Heart right ventricle (tissue), 16 donors: ENCODE measurements at regions of chr7 and their contacts with region 1.

Region 1: GRCh38 chr7:131107337-131108211 is 220.1 kb upstream of the MKLN1 start:
- DNase-seq: peak; percentile 60 to 79
- ATAC-seq: peak; percentile 41 to 58 (median 50)
- H3K4me3 ChIP-seq: peak overlapping the region; percentile 74 to 97 (median 88)
- H3K27ac ChIP-seq: peak overlapping the region; percentile 94 to 100 (median 99)
- H3K4me1 ChIP-seq: peaks cover 0 to 69% (median 55%) of the 10 kb centered on the region in 9 donors
- H3K27me3 ChIP-seq: no peaks in the 10 kb centered on the region
- CTCF ChIP-seq: peak in 1 of 9 donors; percentile 28

Region 2: GRCh38 chr7:131040467-131040932 is 67.1 kb before region 1 on chr7:
- intact Hi-C with region 1: no loop called
- DNase-seq: peak in 1 of 2 donors; percentile 71
- ATAC-seq: peak in 7 of 8 donors; percentile 60 to 83 (median 79)
- H3K4me3 ChIP-seq: no peak overlapping the region
- H3K27ac ChIP-seq: peak overlapping the region in 6 of 10 donors; percentile 30 to 79 (median 48)
- H3K4me1 ChIP-seq: peaks cover 0 to 64% (median 42%) of the 10 kb centered on the region in 9 donors
- H3K27me3 ChIP-seq: no peaks in the 10 kb centered on the region
- CTCF ChIP-seq: peak; percentile 76 to 97 (median 89)

Region 3: GRCh38 chr7:131071786-131072504 is 35.6 kb before region 1 on chr7:
- intact Hi-C with region 1: loop called in 4 of 10 experiments (anchors 2 to 5 kb)
- DNase-seq: peak in 1 of 2 donors; percentile 87
- ATAC-seq: peak; percentile 54 to 80 (median 74)
- H3K4me3 ChIP-seq: peak overlapping the region in 7 of 10 donors; percentile 1 to 36 (median 31)
- H3K27ac ChIP-seq: peak overlapping the region in 9 of 10 donors; percentile 59 to 84 (median 70)
- H3K4me1 ChIP-seq: peaks cover 6 to 98% (median 74%) of the 10 kb centered on the region in 9 donors
- H3K27me3 ChIP-seq: no peaks in the 10 kb centered on the region
- CTCF ChIP-seq: peak in 8 of 9 donors; percentile 34 to 70 (median 52)

Region 4: DNA sequence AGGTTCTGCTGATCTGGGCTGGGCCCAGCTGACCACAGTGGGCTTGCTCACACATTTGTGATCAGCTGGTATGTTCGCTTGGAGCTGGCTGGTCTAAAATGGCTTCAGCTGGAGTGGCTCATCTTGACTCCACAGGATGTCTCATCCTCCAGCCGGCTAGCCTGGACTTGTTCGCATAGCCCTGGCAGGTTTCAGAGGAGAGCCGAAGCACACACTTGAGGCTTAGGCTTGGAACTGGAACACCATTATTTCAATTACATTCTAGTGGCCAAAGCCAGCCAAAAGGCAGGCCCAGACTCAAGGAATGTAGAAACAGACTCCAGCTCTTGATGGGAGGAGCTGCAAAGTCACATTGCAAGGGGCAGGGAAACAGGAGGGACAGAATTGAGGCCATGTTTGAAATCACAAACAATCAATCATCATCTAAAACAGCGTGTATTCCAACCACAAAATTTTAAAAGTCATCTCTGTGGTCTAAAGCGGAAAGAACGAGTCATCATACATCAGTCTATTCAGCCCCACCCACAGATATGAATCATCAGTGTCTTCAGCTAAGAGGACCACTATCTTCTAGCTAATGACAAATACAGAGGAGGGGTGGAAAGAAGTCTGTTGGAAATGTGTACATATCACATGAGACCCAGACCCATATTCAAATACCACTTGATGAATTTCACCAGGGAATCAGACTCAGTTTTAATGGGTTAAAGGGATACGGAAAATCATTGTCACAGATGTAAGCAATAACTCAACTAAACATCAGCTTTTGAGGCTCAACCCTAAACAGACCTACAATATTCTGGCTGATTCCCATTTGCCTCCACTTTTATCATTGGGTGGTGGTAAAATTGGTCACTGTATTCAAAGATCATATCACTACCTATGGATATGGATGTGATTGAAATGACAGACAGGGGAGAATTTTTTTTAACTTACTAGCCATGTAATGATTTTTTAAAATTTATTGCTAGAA is 81.1 kb after region 1 on chr7:
- intact Hi-C with region 1: loop called in 3 of 10 experiments (anchors 5 to 10 kb)
- DNase-seq: no peak
- ATAC-seq: peak in 5 of 8 donors; percentile 17 to 54 (median 49)
- H3K4me3 ChIP-seq: no peak overlapping the region
- H3K27ac ChIP-seq: peak overlapping the region in 1 of 10 donors; percentile 78
- H3K4me1 ChIP-seq: peaks cover 0 to 38% (median 0%) of the 10 kb centered on the region in 9 donors
- H3K27me3 ChIP-seq: no peaks in the 10 kb centered on the region
- CTCF ChIP-seq: no peak

Region 5: DNA sequence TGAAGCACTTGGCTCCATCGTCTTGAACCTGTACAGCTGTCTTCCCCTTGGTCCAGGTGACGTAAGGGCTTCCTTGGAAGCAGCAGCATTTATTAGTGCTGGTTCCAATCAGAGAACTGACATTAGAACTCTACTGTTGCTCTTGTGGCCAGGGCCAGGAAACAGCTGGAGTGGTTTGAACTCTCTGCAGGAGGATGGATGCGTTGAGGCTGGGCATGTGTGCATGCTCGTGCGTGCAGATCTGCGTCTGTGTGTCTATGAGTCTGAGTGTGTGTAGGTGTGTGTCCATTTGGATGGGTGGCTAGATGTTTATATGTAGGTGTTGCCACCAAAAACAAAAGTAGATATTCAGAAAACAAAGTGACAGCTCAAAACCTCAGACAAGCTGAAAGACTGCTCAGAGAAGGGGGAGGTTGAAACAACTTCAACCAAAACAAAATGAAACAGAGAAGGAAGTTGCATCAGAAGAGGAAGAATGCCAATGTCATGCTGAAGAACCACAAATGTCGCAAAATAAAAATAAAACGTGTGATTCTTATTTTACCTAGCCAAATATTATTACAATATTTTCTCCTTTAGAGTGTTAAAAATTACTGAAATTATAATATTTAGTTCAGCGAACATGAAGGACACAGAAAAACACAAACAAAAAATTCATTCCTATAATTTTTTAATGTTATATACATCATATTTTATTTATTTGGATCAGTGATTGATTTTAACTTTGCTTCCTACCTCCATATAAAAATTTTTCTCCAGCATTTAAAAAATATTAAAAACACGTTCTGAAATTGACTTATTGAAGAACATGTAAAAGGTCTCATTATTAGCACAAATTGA is 124.0 kb after region 1 on chr7:
- intact Hi-C with region 1: loop called in 1 of 10 experiments (anchors 10 kb)
- DNase-seq: peak; percentile 23 to 58
- ATAC-seq: peak in 7 of 8 donors; percentile 68 to 83 (median 82)
- H3K4me3 ChIP-seq: peak overlapping the region in 3 of 10 donors; percentile 13 to 35 (median 21)
- H3K27ac ChIP-seq: peak overlapping the region in 9 of 10 donors; percentile 8 to 82 (median 48)
- H3K4me1 ChIP-seq: peaks cover 8 to 40% (median 20%) of the 10 kb centered on the region in 9 donors
- H3K27me3 ChIP-seq: no peaks in the 10 kb centered on the region
- CTCF ChIP-seq: no peak

Region 6: DNA sequence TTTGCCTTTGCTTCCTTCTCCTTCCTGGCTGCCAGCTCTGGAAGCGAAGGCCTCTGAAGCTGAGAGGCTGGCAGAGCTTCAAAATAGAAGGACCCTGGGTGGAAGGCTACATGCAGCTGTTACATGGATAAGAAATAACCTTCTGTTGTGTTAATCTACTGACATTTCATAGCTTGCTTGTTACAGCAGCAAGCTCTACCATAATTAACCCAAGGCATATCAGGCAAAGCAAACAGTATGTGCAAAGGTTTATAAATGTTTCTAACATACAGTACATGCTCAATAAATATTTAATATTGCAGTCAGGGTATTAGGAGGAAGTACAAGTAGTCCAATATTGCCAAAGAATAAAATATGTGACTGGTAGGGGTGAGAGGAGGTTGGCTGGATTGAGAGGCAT is 164.5 kb after region 1 on chr7:
- intact Hi-C with region 1: loop called in 1 of 10 experiments (anchors 5 kb)
- DNase-seq: no peak
- ATAC-seq: peak in 2 of 8 donors; percentile 12 to 28
- H3K4me3 ChIP-seq: no peak overlapping the region
- H3K27ac ChIP-seq: peak overlapping the region in 1 of 10 donors; percentile 75
- H3K4me1 ChIP-seq: peaks cover 0 to 20% (median 12%) of the 10 kb centered on the region in 9 donors
- H3K27me3 ChIP-seq: no peaks in the 10 kb centered on the region
- CTCF ChIP-seq: no peak

Region 7: DNA sequence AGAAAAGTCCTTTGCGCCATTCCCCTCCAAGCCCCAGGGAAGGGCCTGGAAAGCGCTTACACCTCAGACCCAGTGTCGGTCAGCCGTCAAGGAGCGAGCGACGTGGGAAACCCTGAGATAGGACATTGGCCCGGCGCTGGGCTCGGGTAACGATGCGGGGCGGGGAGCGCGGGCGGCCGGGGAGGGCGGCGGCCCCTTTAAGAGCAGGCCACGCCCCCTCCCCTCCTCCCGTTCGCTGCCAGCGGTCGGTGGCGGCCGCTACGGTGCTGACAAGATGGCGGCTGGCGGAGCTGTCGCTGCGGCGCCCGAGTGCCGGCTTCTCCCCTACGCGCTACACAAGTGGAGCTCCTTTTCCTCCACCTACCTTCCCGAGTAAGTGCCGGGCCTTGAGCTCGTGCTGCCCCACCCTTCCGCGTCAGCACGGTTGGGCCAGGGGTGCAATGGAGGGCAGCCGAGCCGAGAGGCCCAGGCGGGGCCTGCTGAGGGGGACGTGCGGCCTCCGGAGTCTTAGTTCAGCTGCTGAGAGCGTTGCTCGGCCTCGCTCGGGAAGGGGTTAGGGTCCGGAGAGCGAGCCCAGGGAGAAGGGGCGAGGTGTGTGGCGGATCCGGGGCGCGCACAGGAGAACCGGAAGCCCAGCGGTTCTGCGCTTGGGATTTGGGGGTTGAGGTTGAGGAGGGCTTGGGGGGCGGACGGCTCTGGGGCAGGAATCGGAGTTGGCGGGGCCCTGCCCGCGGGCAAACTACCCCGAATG is 220.2 kb after region 1 on chr7 and contains the start of gene MKLN1:
- intact Hi-C with region 1: loop called in 3 of 10 experiments (anchors 2 to 10 kb)
- DNase-seq: peak; percentile 93
- ATAC-seq: peak; percentile 99 to 100 (median 99)
- H3K4me3 ChIP-seq: peak within 1 kb of the TSS; percentile 67 to 94 (median 82)
- H3K27ac ChIP-seq: peak within 1 kb of the TSS; percentile 93 to 99 (median 97)
- H3K4me1 ChIP-seq: peaks cover 0 to 50% (median 41%) of the 10 kb centered on the region in 9 donors
- H3K27me3 ChIP-seq: no peaks in the 10 kb centered on the region
- CTCF ChIP-seq: no peak
- total RNA-seq, gene MKLN1: 34.3 to 48.2 (median 44.8) TPM

Region 8: DNA sequence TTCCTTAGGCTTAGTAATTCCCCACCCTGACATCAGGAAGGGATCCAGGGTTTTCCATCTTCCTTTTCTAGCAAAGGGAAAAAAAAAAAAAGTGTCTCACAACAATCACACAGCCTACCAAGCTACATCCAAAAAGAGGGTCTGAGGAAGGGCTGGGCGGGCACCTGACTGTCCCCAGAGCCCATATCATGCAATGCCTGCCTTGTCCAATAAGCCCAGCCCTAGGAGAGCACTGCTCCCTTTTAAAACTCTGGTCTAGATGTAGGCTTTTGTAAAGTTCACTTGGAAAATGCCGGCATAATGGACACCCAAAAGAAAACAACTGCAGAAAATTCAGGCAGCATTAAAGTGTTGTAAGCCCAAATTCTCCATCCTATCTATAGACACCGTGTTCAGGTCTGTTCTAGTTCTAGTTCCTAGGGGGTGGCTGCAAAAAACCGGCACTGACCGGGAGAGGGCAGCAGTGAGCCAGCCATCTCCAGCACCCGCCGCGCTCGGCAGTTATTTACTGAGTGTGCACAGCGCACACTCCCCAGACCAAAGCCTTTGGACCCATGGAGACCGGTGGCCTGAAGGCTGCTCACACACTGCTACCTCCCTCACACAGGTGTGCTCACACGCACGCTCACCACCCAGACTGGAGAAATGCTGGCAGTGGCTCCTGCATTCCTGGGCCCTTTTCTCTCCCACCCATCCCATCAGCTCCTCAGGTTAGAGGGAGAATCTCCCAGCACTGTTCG is 400.2 kb after region 1 on chr7:
- intact Hi-C with region 1: loop called in 1 of 10 experiments (anchors 10 kb)
- DNase-seq: peak; percentile 83 to 87
- ATAC-seq: peak; percentile 57 to 77 (median 73)
- H3K4me3 ChIP-seq: peak overlapping the region in 1 of 10 donors; percentile 11
- H3K27ac ChIP-seq: peak overlapping the region in 6 of 10 donors; percentile 23 to 60 (median 46)
- H3K4me1 ChIP-seq: peaks cover 20 to 77% (median 53%) of the 10 kb centered on the region in 9 donors
- H3K27me3 ChIP-seq: no peaks in the 10 kb centered on the region
- CTCF ChIP-seq: peak; percentile 90 to 98 (median 94)